ENCODE measurements at regions of chr20 and their contacts with region 1.

Region 1: GRCh38 chr20:53578492-53579222 is 15.0 kb downstream of the ZNF217 start:
- DNase-seq: no peak
- ATAC-seq: peak; percentile 81

Region 2: GRCh38 chr20:53786445-53787267 is 208.0 kb after region 1 on chr20:
- intact Hi-C with region 1: no loop called
- DNase-seq: no peak
- ATAC-seq: no peak

Region 3: GRCh38 chr20:53869466-53870258 is 291.0 kb after region 1 on chr20:
- intact Hi-C with region 1: loop called (anchors 5 kb)
- DNase-seq: no peak
- ATAC-seq: peak; percentile 88

Region 4: DNA sequence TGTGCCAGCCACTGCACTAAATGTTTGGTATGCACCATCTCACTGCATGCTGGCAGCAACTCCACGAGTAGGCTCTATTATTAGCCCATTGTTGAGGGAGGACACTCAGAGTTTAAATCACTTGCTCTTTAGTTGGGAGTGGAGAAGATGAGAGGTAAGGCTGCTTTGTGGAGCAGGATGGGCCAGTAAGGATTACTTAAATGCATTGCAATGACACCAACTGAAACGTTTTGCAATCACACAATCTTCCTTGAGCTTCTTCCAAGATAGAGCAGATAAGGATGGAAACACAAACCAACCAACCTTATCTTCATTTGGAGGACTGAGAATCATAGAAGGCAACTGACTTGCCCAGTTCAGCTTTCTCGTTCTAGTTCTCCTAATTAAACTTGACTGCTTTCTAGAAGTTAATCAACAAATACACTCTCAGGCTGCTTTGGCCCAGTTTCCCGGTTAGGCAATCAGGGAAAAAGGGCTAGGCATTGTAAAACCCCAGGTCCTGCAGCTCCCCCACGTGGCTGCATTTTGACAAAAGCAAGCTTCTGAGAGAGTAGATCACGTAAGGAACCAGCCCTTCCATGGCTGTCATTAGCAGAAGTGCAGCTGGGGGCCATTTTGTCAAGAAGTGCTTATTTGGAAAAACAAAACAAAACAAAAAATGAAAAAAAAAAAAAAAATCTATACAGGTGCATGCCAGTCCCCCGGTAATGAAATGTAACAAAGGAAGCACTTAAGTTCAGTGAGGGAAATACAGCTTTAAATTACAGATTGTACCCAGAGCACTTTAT is 361.1 kb after region 1 on chr20:
- intact Hi-C with region 1: loop called (anchors 5 kb)
- DNase-seq: peak; percentile 96
- ATAC-seq: peak; percentile 94

Region 5: DNA sequence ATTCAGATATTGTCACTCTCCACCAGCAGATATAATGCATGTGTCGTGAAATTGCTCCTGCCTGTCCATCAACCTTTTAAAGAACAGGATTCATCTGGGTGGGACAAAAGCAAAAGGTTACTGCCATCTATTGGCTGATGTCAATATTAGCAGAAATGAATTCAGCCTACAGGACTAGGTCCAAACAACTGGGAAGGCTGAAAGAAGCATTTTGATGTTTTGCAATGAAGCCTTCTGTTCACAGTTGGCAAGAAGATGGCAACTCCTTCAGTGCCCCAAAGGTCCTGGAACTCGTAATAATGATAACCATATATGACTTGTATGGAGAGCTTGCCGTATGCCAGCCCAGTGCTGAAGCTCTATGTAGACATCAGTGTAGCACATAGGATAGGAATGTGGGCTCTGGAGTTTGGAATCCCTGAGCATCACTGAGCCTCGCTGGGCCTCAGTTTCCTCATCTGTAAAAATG is 484.2 kb after region 1 on chr20:
- intact Hi-C with region 1: loop called (anchors 10 kb)
- DNase-seq: no peak
- ATAC-seq: peak; percentile 39